Mammary epithelial cell (primary cell): ENCODE measurements at regions of chr16 and their contacts with region 1.

Region 1: GRCh38 chr16:53054670-53055485 is at the start of gene CHD9:
- DNase-seq: peak; percentile 83
- H3K4me3 ChIP-seq: peak within 1 kb of the TSS; percentile 46 to 82 (median 72)
- H3K27ac ChIP-seq: peak within 1 kb of the TSS; percentile 54
- H3K4me1 ChIP-seq: peaks cover 24% of the 10 kb centered on the region
- H3K27me3 ChIP-seq: no peaks in the 10 kb centered on the region
- CTCF ChIP-seq: peak; percentile 82 to 99
- total RNA-seq, gene CHD9: 49.2 to 53.2 TPM

Region 2: GRCh38 chr16:53034306-53034705 is 20.6 kb before region 1 on chr16:
- CTCF ChIA-PET with region 1: no interaction called
- dilution Hi-C with region 1: no loop called
- in situ Hi-C with region 1: no loop called
- intact Hi-C with region 1: loop called (anchors 1 kb)
- DNase-seq: peak; percentile 55
- H3K4me3 ChIP-seq: no peak overlapping the region
- H3K27ac ChIP-seq: no peak overlapping the region
- H3K4me1 ChIP-seq: peaks cover 36% of the 10 kb centered on the region
- H3K27me3 ChIP-seq: no peaks in the 10 kb centered on the region
- CTCF ChIP-seq: no peak

Region 3: DNA sequence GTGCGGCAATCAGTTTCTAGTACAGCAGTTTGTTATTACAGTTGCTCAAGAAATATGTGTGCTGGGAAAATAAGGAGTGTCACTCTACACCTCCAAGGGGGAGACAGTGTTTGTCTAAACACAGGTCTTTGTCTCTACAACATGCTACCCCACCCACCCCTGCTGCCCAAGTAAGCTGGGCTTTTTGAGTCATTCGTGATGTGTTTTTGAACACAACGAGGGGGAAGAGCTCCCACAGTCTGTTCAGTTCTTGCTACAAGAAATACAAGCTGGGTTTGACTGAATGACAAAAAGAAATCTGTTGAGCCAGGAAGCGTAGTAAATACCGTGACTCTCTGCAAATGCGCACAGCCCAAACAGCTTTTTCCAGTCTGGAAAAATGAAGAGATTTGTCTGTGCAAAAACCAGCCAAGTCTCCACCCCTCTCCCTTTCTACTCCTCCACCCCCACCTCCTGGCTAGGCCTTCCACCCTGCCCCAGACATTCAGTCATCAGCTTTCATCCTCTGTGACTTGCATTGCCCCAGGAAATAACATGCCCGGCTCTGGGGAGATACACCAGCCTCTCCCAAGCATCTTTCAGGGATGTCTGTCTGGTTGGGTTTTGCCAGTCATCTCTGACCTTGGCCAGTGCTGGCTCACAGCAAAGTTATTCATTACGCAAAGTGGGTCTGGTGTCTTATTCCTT is 25.6 kb after region 1 on chr16:
- CTCF ChIA-PET with region 1: no interaction called
- dilution Hi-C with region 1: no loop called
- in situ Hi-C with region 1: no loop called
- intact Hi-C with region 1: loop called (anchors 1 kb)
- DNase-seq: peak; percentile 91
- H3K4me3 ChIP-seq: peak overlapping the region in 2 of 3 experiments; percentile 3 to 13
- H3K27ac ChIP-seq: peak overlapping the region; percentile 64
- H3K4me1 ChIP-seq: peaks cover 63% of the 10 kb centered on the region
- H3K27me3 ChIP-seq: no peaks in the 10 kb centered on the region
- CTCF ChIP-seq: no peak

Region 4: DNA sequence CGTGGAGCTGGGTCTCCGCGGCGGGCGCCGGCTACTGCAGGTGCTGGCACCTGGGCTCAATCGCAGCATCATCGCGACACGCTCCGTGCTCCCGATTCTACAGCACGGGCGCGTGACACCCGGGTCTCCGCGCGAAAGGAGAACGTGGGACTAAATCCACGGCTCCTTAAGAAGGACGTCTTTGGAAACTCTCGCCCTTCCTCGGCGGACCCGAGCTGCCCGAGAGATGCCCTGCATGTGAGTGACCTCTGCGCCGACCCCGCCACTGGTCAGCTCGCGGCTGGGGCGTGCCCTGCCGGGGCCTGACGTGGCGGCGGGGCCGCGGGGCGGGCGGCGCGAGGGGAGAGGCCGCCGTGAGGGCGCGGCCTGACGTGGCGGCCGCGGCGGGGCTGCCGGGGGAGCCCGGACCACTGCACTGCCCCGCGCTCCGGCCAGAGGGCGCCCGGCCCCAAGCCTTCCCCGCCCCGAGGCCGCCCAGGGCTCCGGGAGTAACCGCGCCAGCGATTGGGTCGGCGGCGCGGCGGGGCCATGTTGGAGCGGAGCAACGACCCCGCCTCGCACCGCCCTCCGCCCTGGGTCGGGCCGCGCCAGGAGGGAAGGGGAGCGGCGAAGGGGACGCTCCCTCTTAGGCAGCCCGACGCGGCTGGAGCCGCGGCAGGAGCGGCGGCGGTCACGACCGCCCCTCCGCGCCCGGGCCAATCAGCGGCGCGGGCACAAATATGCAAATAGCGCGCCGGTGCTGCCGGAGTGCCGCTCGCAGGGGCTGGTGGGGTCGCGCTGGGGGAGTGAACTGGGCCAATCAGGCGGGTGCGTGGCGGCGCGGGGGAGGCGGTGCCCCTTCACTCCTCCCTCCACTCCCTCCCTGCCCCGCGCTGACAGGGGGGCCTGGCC is 75.5 kb after region 1 on chr16:
- CTCF ChIA-PET with region 1: no interaction called
- dilution Hi-C with region 1: loop called (anchors 5 kb)
- in situ Hi-C with region 1: loop called in 1 of 2 experiments (anchors 10 kb)
- intact Hi-C with region 1: loop called (anchors 1 kb)
- DNase-seq: peak; percentile 94
- H3K4me3 ChIP-seq: peak overlapping the region; percentile 60 to 83 (median 68)
- H3K27ac ChIP-seq: peak overlapping the region; percentile 78
- H3K4me1 ChIP-seq: peaks cover 15% of the 10 kb centered on the region
- H3K27me3 ChIP-seq: no peaks in the 10 kb centered on the region
- CTCF ChIP-seq: peak; percentile 15 to 49

Region 5: DNA sequence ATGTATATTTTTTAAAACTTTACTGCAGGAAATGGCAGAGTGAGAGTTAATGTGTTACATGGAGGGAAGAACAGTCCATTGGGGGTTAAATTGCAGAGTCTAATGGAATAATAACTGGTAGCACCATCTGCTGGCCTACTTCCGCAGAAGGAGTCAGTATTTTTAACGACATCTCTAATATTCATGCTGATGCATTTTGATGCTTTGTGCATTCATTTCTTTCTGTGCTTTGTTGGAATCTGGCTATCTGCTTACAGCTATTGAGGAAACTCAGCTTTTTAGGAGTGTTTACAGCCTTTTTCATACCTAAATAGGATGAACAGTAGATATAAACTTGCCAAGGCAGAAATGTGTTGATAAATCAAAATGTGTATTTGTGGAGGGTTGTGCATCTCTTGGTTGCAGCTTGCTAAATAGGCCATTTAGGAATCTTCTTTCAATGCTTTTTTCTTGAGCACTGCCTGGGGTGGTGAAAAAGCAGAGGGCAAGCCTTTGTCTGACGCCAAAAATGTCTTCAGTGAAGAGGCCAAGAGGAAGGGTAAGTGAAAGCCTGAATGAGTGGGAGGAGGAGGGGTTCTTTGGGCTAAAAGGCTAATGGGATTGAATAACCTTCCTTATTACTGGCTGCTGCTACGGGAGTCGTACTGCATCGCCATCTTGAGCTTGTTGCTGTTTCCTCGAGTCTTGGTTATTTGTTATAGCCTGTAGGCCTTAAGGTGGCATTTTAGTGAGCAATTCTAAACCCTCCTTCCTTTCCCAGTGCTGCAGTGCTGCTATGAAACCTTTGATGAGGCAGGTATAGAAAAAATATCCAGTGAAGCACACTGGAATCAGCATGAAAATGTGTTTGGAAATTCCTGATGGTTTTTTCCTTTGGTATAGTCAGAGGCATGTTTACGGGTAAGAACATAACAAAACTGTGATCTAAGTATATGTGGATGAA is 153.2 kb after region 1 on chr16:
- CTCF ChIA-PET with region 1: no interaction called
- dilution Hi-C with region 1: no loop called
- in situ Hi-C with region 1: loop called in 1 of 2 experiments (anchors 25 kb)
- intact Hi-C with region 1: loop called (anchors 1 kb)
- DNase-seq: peak; percentile 82
- H3K4me3 ChIP-seq: peak overlapping the region; percentile 57 to 79 (median 63)
- H3K27ac ChIP-seq: peak overlapping the region; percentile 90
- H3K4me1 ChIP-seq: peaks cover 9% of the 10 kb centered on the region
- H3K27me3 ChIP-seq: no peaks in the 10 kb centered on the region
- CTCF ChIP-seq: peak; percentile 55 to 60

Region 6: GRCh38 chr16:53235851-53236250 is 181.0 kb after region 1 on chr16:
- CTCF ChIA-PET with region 1: no interaction called
- dilution Hi-C with region 1: no loop called
- in situ Hi-C with region 1: no loop called
- intact Hi-C with region 1: no loop called
- DNase-seq: no peak
- H3K4me3 ChIP-seq: no peak overlapping the region
- H3K27ac ChIP-seq: no peak overlapping the region
- H3K4me1 ChIP-seq: no peaks in the 10 kb centered on the region
- H3K27me3 ChIP-seq: no peaks in the 10 kb centered on the region
- CTCF ChIP-seq: no peak

Region 7: DNA sequence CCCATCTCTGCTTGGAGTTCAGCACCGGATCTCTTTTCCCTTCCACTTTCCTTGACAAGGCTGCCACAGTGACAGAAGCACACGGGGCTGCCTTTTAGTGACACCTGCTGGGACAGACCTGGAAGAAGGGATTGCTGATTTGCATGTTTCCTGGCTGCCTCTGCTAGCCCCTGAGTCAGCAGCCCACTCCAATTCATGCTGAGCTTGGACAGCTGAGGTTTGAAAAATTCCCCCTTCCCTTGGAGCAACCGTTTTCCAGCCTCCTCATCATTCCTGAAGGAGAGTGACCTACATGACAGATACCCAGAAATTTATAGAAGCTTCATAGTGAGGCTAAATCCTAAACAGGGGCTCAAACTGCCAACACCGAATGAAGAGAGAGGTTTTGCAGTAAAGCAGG is 360.6 kb after region 1 on chr16:
- CTCF ChIA-PET with region 1: no interaction called
- dilution Hi-C with region 1: no loop called
- in situ Hi-C with region 1: no loop called
- intact Hi-C with region 1: loop called (anchors 10 kb)
- DNase-seq: peak; percentile 25
- H3K4me3 ChIP-seq: no peak overlapping the region
- H3K27ac ChIP-seq: no peak overlapping the region
- H3K4me1 ChIP-seq: no peaks in the 10 kb centered on the region
- H3K27me3 ChIP-seq: no peaks in the 10 kb centered on the region
- CTCF ChIP-seq: peak in 1 of 2 donors; percentile 34

Region 8: GRCh38 chr16:54165174-54165911 is 1110.5 kb after region 1 on chr16:
- CTCF ChIA-PET with region 1: no interaction called
- dilution Hi-C with region 1: no loop called
- in situ Hi-C with region 1: no loop called
- intact Hi-C with region 1: no loop called
- DNase-seq: no peak
- H3K4me3 ChIP-seq: no peak overlapping the region
- H3K27ac ChIP-seq: no peak overlapping the region
- H3K4me1 ChIP-seq: no peaks in the 10 kb centered on the region
- H3K27me3 ChIP-seq: no peaks in the 10 kb centered on the region
- CTCF ChIP-seq: no peak